ENCODE measurements at regions of chr11 and their contacts with region 1.

Region 1: DNA sequence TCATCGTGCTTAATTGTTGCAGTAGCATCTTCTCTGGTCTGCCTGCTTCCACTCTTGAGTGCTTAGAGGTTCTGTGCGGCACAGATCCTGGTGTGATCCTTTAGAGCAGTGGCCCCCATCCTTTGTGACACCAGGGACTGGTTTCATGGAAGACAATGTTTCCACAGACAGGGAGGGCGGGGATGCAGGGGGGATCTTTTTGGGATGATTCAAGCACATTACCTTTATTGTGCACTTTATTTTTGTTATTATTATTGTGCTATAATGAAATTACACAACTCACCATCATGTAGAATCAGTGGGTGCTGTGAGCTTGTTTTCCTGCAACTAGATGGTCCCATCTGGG is 76.8 kb upstream of the SHANK2 start:
- DNase-seq: no peak
- ATAC-seq: no peak; the same call in 1 of the 2 replicates
- H3K4me3 ChIP-seq: no peak overlapping the region
- H3K27ac ChIP-seq: no peak overlapping the region
- H3K4me1 ChIP-seq: no peaks in the 10 kb centered on the region
- H3K27me3 ChIP-seq: no peaks in the 10 kb centered on the region
- CTCF ChIP-seq: no peak

Region 2: GRCh38 chr11:71086675-71087258 is 242.4 kb before region 1 on chr11:
- CTCF ChIA-PET with region 1: interaction called, 24 read pairs
- POLR2A ChIA-PET with region 1: no interaction called
- intact Hi-C with region 1: loop called (anchors 1 kb)
- DNase-seq: peak; percentile 63
- ATAC-seq: peak; percentile 81
- H3K4me3 ChIP-seq: no peak overlapping the region
- H3K27ac ChIP-seq: no peak overlapping the region
- H3K4me1 ChIP-seq: no peaks in the 10 kb centered on the region
- H3K27me3 ChIP-seq: no peaks in the 10 kb centered on the region
- CTCF ChIP-seq: peak; percentile 87

Region 3: GRCh38 chr11:71120490-71120896 is 208.6 kb before region 1 on chr11:
- CTCF ChIA-PET with region 1: interaction called, 19 read pairs
- POLR2A ChIA-PET with region 1: no interaction called
- intact Hi-C with region 1: loop called (anchors 2 kb)
- DNase-seq: peak; percentile 67
- ATAC-seq: peak; percentile 78
- H3K4me3 ChIP-seq: no peak overlapping the region
- H3K27ac ChIP-seq: no peak overlapping the region
- H3K4me1 ChIP-seq: 0 out of 2 replicates have a peak, but pooled peaks cover 7% of the 10 kb centered on the region
- H3K27me3 ChIP-seq: no peaks in the 10 kb centered on the region
- CTCF ChIP-seq: peak; percentile 69

Region 4: DNA sequence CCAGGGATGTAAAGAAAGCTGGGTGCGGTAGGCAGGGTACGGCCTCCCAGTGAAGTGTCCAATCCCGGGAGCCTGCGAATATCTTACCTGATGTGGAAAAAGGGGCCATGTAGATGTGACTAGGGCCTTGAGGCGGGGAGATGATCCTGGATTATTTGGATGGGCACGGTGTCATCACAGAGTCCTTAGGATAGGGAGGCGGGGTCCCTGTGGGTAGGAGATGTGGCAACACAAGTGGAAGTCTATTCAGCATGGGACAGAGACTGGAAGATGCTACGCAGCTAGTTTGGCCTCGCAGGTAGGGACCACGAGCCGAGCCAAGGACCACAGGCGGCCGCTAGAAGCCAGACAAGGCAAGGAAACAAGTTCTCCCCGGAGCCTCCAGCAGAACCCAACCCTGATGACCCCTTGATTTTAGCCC is 30.4 kb before region 1 on chr11:
- CTCF ChIA-PET with region 1: interaction called, 13 read pairs
- POLR2A ChIA-PET with region 1: no interaction called
- intact Hi-C with region 1: no loop called
- DNase-seq: no peak
- ATAC-seq: no peak; the same call in 1 of the 2 replicates
- H3K4me3 ChIP-seq: peak overlapping the region; percentile 13; the same call in 1 of the 2 replicates
- H3K27ac ChIP-seq: peak overlapping the region; percentile 84
- H3K4me1 ChIP-seq: peaks cover 34% of the 10 kb centered on the region
- H3K27me3 ChIP-seq: no peaks in the 10 kb centered on the region
- CTCF ChIP-seq: no peak